GM12878 (cell line): ENCODE measurements at regions of chr16 and their contacts with region 1.

Region 1: GRCh38 chr16:68367030-68367429 is 56.2 kb downstream of the PRMT7 start:
- DNase-seq: no peak
- ATAC-seq: peak; percentile 26
- H3K4me3 ChIP-seq: no peak overlapping the region
- H3K27ac ChIP-seq: no peak overlapping the region
- H3K4me1 ChIP-seq: peaks cover 42% of the 10 kb centered on the region
- H3K27me3 ChIP-seq: no peaks in the 10 kb centered on the region
- CTCF ChIP-seq: peak; percentile 34 to 42 (median 41); a peak in 5 of 6 replicates
- EP300 ChIP-seq: no peak
- POLR2A ChIP-seq: no peak
- RAD21 ChIP-seq: peak; percentile 34; the same call in 1 of the 2 replicates

Region 2: GRCh38 chr16:68356249-68356918 is 10.6 kb before region 1 on chr16:
- CTCF ChIA-PET with region 1: interaction called, 7 read pairs
- POLR2A ChIA-PET with region 1: no interaction called
- RAD21 ChIA-PET with region 1: interaction called, 7 read pairs
- SMC1A ChIA-PET with region 1: interaction called, 7 read pairs
- in situ Hi-C with region 1: no loop called
- intact Hi-C with region 1: loop called (anchors 1 kb)
- DNase-seq: peak; percentile 69
- ATAC-seq: peak; percentile 89
- H3K4me3 ChIP-seq: no peak overlapping the region
- H3K27ac ChIP-seq: peak overlapping the region; percentile 51
- H3K4me1 ChIP-seq: peaks cover 23% of the 10 kb centered on the region
- H3K27me3 ChIP-seq: no peaks in the 10 kb centered on the region
- CTCF ChIP-seq: no peak
- EP300 ChIP-seq: peak; percentile 60 to 88; a peak in 3 of 4 replicates
- POLR2A ChIP-seq: peak; percentile 36; the same call in 1 of the 2 replicates
- RAD21 ChIP-seq: no peak

Region 3: DNA sequence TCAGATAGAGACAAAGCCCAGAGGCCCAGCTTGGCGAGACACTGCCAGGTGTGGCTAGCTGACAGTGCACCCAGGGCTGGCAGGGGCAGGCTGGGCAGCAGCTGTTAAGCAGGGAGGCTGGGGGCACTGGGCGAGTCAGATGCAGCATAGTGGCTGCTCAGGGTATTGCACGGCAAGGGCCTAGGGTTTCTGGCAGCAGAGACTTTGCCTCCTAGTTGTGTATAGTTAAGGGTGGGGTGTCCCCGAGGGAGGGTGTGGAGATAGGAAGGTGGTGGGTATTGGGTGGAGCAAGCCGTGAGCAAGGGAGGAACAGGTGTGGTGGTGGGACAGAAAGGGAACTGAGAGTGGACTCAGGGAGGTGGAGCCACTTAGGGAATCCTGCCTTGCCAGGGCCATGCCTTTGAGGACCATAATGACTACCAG is 15.3 kb after region 1 on chr16:
- CTCF ChIA-PET with region 1: interaction called, 77 read pairs
- POLR2A ChIA-PET with region 1: interaction called, 3 read pairs
- RAD21 ChIA-PET with region 1: interaction called, 7 read pairs
- SMC1A ChIA-PET with region 1: interaction called, 7 read pairs
- in situ Hi-C with region 1: no loop called
- intact Hi-C with region 1: no loop called
- DNase-seq: no peak
- ATAC-seq: peak; percentile 88
- H3K4me3 ChIP-seq: no peak overlapping the region
- H3K27ac ChIP-seq: no peak overlapping the region
- H3K4me1 ChIP-seq: peaks cover 10% of the 10 kb centered on the region
- H3K27me3 ChIP-seq: no peaks in the 10 kb centered on the region; a peak in 1 of 4 replicates
- CTCF ChIP-seq: peak in 2 of 3 experiments; percentile 57 to 62; a peak in 4 of 6 replicates
- EP300 ChIP-seq: no peak
- POLR2A ChIP-seq: no peak
- RAD21 ChIP-seq: no peak

Region 4: DNA sequence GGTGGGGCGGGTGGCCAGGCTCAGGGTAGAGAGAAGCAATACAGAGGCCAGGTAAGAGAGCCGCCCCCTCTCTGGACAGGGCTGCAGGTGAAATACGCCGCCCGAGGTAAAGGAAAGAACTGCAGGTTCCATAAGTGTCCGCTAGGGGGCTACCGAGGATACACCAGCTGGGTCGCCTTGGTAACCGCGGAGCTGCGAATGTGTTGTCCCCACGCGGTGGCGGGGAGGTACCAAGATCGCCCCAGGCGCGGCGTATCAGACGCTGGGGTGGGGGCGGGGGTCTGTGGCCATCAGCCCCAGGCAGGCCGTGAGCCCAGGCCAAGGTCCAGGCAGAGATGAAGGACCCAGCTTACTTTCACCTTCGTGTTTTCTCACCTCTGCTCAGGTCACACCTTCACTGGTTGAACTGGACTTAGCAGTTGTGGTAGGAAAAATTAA is 153.6 kb after region 1 on chr16:
- CTCF ChIA-PET with region 1: interaction called, 10 read pairs
- POLR2A ChIA-PET with region 1: interaction called, 3 read pairs
- RAD21 ChIA-PET with region 1: interaction called, 4 read pairs
- SMC1A ChIA-PET with region 1: interaction called, 6 read pairs
- in situ Hi-C with region 1: no loop called
- intact Hi-C with region 1: no loop called
- DNase-seq: no peak
- ATAC-seq: peak; percentile 98
- H3K4me3 ChIP-seq: no peak overlapping the region
- H3K27ac ChIP-seq: no peak overlapping the region
- H3K4me1 ChIP-seq: no peaks in the 10 kb centered on the region; the same call in 1 of the 2 replicates
- H3K27me3 ChIP-seq: no peaks in the 10 kb centered on the region; a peak in 1 of 4 replicates
- CTCF ChIP-seq: peak; percentile 99 to 100 (median 100); a peak in 5 of 6 replicates
- EP300 ChIP-seq: peak in 1 of 2 experiments; percentile 25; a peak in 1 of 4 replicates
- POLR2A ChIP-seq: no peak
- RAD21 ChIP-seq: peak; percentile 55